HepG2 (cell line): ENCODE measurements at regions of chr2 and their contacts with region 1.

Region 1: GRCh38 chr2:109545828-109546713 is 67.7 kb downstream of the SEPTIN10 start:
- DNase-seq: peak; percentile 63
- ATAC-seq: peak; percentile 91
- H3K4me3 ChIP-seq: no peak overlapping the region
- H3K27ac ChIP-seq: no peak overlapping the region
- H3K4me1 ChIP-seq: peaks cover 14% of the 10 kb centered on the region
- H3K27me3 ChIP-seq: no peaks in the 10 kb centered on the region
- CTCF ChIP-seq: peak; percentile 95
- EP300 ChIP-seq: 0 out of 4 replicates have a peak, but pooled peaks of 1 of the 2 experiments have one; percentile 8
- POLR2A ChIP-seq: no peak
- RAD21 ChIP-seq: peak; percentile 97

Region 2: DNA sequence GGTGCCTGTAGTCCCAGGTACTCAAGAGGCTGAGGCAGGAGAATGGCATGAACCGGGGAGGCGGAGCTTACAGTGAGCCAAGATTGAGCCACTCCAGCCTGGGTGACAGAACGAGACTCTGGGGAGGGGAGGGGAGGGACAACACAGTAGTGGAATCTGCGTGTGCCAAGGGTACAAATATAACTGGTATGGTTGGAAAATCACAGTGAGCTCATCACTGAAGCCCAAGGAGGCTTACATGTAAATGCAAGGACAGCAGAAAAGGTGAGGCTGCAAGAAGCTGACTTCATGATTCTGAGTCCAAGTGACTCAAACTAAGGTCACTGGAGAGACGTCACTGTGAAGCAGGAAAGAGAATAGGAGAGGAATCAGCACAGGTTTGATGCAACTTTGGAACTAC is 58.5 kb after region 1 on chr2:
- CTCF ChIA-PET with region 1: no interaction called
- POLR2A ChIA-PET with region 1: no interaction called
- in situ Hi-C with region 1: loop called (anchors 5 kb)
- intact Hi-C with region 1: no loop called
- DNase-seq: no peak
- ATAC-seq: no peak
- H3K4me3 ChIP-seq: no peak overlapping the region
- H3K27ac ChIP-seq: no peak overlapping the region
- H3K4me1 ChIP-seq: peaks cover 43% of the 10 kb centered on the region
- H3K27me3 ChIP-seq: no peaks in the 10 kb centered on the region
- CTCF ChIP-seq: no peak
- EP300 ChIP-seq: no peak
- POLR2A ChIP-seq: no peak
- RAD21 ChIP-seq: no peak

Region 3: DNA sequence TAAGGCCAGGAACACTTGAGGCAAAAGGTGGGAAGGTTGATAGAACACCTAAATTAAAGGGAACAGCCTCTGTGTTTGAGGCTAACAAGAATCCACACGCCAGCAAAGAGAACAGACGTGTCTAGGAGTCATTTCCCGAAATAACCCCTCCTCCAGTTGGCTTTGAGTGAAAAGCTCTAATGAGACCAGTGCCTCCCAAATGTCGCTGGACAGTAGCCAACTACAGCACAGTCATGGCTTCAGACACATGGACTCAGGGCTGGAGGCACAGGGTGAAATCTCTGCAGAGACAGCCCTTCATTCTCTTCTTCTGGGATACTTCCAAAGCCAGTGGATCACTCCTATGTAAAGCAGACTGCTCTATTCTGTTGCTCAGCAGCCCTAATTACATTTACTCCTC is 117.7 kb after region 1 on chr2:
- CTCF ChIA-PET with region 1: interaction called, 9 read pairs
- POLR2A ChIA-PET with region 1: no interaction called
- in situ Hi-C with region 1: no loop called
- intact Hi-C with region 1: loop called (anchors 1 kb)
- DNase-seq: peak; percentile 52
- ATAC-seq: peak; percentile 28
- H3K4me3 ChIP-seq: no peak overlapping the region
- H3K27ac ChIP-seq: no peak overlapping the region
- H3K4me1 ChIP-seq: peaks cover 50% of the 10 kb centered on the region
- H3K27me3 ChIP-seq: no peaks in the 10 kb centered on the region
- CTCF ChIP-seq: no peak
- EP300 ChIP-seq: no peak
- POLR2A ChIP-seq: no peak
- RAD21 ChIP-seq: no peak

Region 4: GRCh38 chr2:109736177-109736827 is 190.2 kb after region 1 on chr2:
- CTCF ChIA-PET with region 1: interaction called, 43 read pairs
- POLR2A ChIA-PET with region 1: no interaction called
- in situ Hi-C with region 1: no loop called
- intact Hi-C with region 1: loop called (anchors 1 kb)
- DNase-seq: peak; percentile 69
- ATAC-seq: peak; percentile 90
- H3K4me3 ChIP-seq: no peak overlapping the region; a peak in 1 of 6 replicates
- H3K27ac ChIP-seq: no peak overlapping the region
- H3K4me1 ChIP-seq: peaks cover 11% of the 10 kb centered on the region
- H3K27me3 ChIP-seq: no peaks in the 10 kb centered on the region
- CTCF ChIP-seq: peak; percentile 92
- EP300 ChIP-seq: no peak
- POLR2A ChIP-seq: no peak
- RAD21 ChIP-seq: peak; percentile 76